K562 (cell line): ENCODE measurements at regions of chr15 and their contacts with region 1.

Region 1: DNA sequence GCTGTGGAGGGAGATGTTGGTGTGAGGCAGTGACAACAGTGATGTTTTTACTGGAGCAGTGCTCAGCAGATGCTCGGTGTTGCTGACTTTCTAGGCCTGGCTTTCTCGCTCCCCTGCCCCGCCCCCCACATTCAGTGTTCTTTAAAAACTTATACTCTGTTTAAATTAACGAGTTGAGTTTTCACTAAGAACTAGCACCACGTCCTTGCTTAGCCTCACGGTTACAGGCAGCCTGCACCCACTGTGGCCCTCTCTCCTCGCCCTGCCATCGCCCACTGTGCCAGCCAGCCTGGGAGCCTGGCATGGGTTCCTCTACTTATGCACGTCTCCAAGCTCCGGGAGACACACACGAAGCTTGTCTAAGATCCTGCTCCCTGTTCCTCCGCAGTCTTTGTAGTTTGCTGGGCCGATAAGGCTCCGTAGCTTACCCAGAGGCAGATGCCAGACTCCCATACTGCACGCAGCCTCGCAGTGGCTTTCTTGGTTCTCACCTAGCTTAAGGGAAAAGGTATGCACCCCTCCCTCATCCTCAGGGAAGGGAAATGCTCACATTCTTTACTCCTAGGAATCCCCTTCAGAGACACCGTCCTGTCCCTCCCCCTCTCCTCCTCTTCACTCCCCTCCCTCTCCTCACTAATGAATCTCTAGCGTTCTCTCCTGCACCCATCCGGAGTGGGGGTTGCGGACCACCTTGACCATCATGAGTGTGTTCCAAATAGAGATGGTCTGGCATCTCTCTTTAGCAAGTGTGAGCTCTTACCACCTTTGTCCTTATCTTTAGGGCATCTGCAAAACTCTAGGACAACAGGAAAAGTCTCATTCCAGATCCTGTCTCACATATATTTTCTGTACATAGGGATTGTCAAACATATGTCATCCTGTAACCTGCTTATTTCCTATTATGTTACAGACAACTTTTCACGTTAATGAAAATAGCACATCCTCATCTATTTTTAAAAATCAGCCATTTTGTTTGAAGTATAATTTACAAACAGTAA is 56.4 kb downstream of the TMEM266 start:
- DNase-seq: no peak
- ATAC-seq: no peak
- H3K4me3 ChIP-seq: no peak overlapping the region
- H3K27ac ChIP-seq: no peak overlapping the region
- H3K4me1 ChIP-seq: no peaks in the 10 kb centered on the region; a peak in 1 of 5 replicates
- H3K27me3 ChIP-seq: peaks cover 29 to 44% of the 10 kb centered on the region in 2 experiments; a peak in 4 of 5 replicates
- CTCF ChIP-seq: no peak
- EP300 ChIP-seq: no peak
- POLR2A ChIP-seq: no peak
- RAD21 ChIP-seq: no peak

Region 2: DNA sequence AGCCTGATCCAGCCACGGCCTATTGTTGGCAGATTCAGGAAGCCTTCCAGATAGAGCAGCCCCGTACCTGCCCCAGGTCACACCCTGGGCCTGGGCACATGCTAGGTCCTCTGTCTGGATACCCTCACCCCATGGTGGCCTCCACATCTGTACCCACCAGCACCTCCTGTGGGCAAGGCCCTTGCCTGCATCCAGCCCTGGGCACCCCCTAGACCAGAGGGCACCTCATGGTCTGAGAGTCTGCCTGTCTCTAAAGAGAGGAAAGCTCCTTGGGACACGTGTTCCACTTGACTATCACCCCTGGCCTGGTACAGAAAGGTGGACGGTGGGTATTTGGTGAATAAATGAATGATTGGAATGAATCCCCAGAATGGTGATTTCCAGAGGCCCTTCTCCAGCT is 789.2 kb before region 1 on chr15:
- CTCF ChIA-PET with region 1: no interaction called
- POLR2A ChIA-PET with region 1: no interaction called
- in situ Hi-C with region 1: loop called (anchors 10 kb)
- intact Hi-C with region 1: no loop called
- DNase-seq: no peak
- ATAC-seq: no peak
- H3K4me3 ChIP-seq: no peak overlapping the region
- H3K27ac ChIP-seq: no peak overlapping the region
- H3K4me1 ChIP-seq: peaks cover 0 to 3% of the 10 kb centered on the region in 2 experiments; a peak in 1 of 5 replicates
- H3K27me3 ChIP-seq: no peaks in the 10 kb centered on the region; a peak in 1 of 5 replicates
- CTCF ChIP-seq: no peak
- EP300 ChIP-seq: no peak
- POLR2A ChIP-seq: no peak
- RAD21 ChIP-seq: no peak